GM18951 (cell line): ENCODE measurements at regions of chr1 and their contacts with region 1.

Region 1: DNA sequence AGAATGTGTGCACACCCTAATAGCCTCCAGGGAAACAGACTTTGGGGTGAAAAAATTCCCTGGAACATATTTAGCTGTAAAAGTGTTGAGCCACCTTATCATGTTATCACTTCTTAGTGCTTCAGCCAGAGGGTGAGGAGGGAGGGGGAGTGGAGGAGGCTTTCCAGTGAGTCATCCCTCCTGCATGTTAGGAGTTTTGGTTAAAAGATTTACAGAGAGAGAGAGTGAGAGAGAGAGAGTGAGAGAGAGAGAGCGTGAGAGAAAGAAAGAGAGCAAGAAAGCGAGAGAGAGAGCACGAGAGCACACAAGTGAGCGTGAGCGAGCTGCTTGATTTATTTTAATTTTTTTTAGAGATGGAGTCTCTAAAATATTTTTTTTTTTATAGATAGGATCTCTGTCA is 13.5 kb upstream of the CACNA1E start:
- POLR2A ChIP-seq: no peak

Region 2: DNA sequence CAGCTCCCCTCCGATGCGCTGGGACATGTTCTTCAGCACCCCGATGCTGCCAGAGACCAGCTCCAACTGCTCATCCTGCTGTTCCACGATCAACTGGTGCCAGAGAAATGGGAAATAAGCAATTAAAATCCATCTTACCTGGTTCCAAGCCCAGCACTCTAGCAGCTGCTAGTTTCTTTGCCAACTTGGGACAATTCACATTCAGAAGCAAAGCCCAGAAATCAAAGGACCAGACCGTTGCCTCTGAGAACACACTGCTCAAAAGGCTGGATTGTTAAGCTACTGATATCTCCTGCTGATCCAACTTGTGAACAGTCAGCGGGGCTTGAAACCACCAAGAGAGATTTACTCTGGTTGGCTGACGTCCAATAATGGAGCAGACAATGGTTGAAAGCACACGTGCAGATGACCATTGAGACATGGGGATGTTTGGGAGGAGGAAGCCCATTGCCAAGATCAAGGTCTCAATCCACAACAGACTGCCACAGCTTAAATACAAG is 481.5 kb before region 1 on chr1:
- in situ Hi-C with region 1: no loop called
- POLR2A ChIP-seq: no peak

Region 3: GRCh38 chr1:181033799-181034451 is 435.9 kb before region 1 on chr1 and contains the start of gene MR1:
- in situ Hi-C with region 1: no loop called
- POLR2A ChIP-seq: peak; percentile 65

Region 4: DNA sequence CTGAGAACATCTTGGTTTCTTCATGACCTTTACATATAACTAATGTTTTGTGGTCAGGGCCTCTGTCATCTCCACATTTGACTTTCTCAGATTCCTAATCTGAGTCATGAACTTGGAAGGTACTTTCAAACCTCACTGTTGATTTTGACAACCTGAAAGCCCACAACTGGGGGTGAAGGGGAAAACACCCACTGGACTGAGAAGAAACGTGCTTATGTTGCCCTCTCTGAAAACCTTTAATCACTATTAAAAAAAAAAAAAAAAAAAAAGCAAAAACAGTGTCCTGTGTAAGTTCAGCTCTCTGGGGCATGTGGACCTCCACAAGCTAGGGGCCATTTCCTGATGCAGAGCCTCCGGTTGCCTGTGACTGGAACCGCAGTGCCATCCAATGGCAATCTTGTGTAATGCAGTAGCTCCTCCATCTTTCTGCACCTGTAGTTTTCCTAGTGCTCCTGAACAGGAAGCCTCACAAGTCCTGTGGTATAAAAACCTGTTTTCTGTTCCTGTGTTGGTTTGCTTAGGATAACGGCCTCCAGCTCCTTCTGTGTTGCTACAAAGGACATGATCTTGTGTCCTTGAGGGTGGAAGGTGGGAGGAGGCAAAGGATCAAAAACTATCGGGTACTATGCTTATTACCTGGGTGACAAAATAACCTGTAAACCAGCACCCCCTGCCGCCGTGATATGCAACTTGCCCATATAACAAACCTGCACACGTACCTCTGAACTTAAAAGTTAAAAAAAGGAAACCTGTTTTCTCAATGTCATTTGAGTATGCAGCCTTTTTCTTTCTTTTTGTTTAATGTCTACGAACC is 467.1 kb after region 1 on chr1:
- in situ Hi-C with region 1: loop called (anchors 5 kb)
- POLR2A ChIP-seq: no peak

Region 5: GRCh38 chr1:182206626-182207239 is 736.9 kb after region 1 on chr1:
- in situ Hi-C with region 1: no loop called
- POLR2A ChIP-seq: no peak